ENCODE measurements at regions of chr19 and their contacts with region 1.

Region 1: GRCh38 chr19:14347999-14348889 is 33.0 kb upstream of the ADGRE5 start:
- DNase-seq: peak; percentile 49 to 66 (median 59)
- H3K4me3 ChIP-seq: no peak overlapping the region
- H3K4me3 Mint-ChIP-seq: peak overlapping the region; percentile 48 to 72 (median 68)
- H3K27ac ChIP-seq: no peak overlapping the region
- H3K27ac Mint-ChIP-seq: peak overlapping the region in 3 of 7 donors; percentile 19 to 62 (median 22)
- H3K4me1 ChIP-seq: peaks cover 27% of the 10 kb centered on the region
- H3K4me1 Mint-ChIP-seq: peaks cover 9 to 28% (median 17%) of the 10 kb centered on the region in 4 donors
- H3K27me3 ChIP-seq: no peaks in the 10 kb centered on the region
- H3K27me3 Mint-ChIP-seq: no peaks in the 10 kb centered on the region

Region 2: DNA sequence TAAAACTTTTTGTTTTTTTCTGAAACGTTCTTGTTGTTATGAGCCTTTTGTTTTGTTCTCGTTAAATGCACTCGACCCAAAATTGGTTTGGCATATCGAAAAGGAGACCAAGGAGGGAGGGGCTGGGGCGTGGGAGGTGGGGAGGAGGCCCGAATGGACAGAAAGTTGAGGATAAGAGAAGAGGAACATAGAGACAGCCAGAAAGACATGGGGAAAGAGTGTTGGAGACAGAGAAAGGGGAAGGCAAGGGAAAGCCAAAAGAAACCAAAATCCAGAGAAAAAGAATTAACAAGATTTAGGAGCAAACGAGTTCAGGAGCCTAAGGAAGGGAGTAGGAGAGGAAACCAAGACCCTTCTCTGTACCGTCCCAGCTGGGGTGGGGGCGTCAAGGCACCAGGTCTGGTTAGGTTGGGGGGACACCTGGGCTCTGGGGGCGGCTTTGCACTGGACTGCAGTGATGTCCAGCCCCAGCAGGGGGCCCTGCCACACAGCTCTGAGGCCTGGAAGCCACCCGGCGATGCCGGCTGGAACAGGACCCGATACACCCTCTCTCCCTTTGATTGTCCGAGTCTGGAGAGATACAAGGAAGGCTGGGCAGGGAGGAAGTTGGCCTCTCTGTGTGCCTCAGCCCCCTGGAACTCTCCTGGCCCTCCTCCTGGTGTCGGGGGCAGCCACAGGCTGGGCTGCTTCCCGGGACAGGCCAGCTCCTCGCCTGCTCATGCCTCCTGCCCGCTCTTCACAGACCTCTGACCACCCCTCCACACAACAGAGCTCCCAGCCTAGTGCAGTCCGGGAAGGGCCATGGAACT is 200.2 kb before region 1 on chr19:
- CTCF ChIA-PET with region 1: interaction called, 15 read pairs
- POLR2A ChIA-PET with region 1: interaction called, 3 read pairs
- intact Hi-C with region 1: no loop called
- DNase-seq: peak in 4 of 5 donors; percentile 35 to 47 (median 41)
- H3K4me3 ChIP-seq: no peak overlapping the region
- H3K4me3 Mint-ChIP-seq: peak overlapping the region in 7 of 8 donors; percentile 51 to 68 (median 62)
- H3K27ac ChIP-seq: peak overlapping the region; percentile 74
- H3K27ac Mint-ChIP-seq: peak overlapping the region; percentile 90 to 99 (median 97)
- H3K4me1 ChIP-seq: peaks cover 36% of the 10 kb centered on the region
- H3K4me1 Mint-ChIP-seq: peaks cover 15 to 43% (median 28%) of the 10 kb centered on the region in 4 donors
- H3K27me3 ChIP-seq: no peaks in the 10 kb centered on the region
- H3K27me3 Mint-ChIP-seq: no peaks in the 10 kb centered on the region

Region 3: GRCh38 chr19:14198384-14199376 is 149.6 kb before region 1 on chr19:
- CTCF ChIA-PET with region 1: interaction called, 98 read pairs
- POLR2A ChIA-PET with region 1: interaction called, 6 read pairs
- intact Hi-C with region 1: loop called (anchors 1 kb)
- DNase-seq: no peak
- H3K4me3 ChIP-seq: no peak overlapping the region
- H3K4me3 Mint-ChIP-seq: no peak overlapping the region
- H3K27ac ChIP-seq: no peak overlapping the region
- H3K27ac Mint-ChIP-seq: no peak overlapping the region
- H3K4me1 ChIP-seq: peaks cover 3% of the 10 kb centered on the region
- H3K4me1 Mint-ChIP-seq: peaks cover 15 to 47% (median 33%) of the 10 kb centered on the region in 4 donors
- H3K27me3 ChIP-seq: no peaks in the 10 kb centered on the region
- H3K27me3 Mint-ChIP-seq: peaks cover 0 to 1% of the 10 kb centered on the region in 2 donors

Region 4: DNA sequence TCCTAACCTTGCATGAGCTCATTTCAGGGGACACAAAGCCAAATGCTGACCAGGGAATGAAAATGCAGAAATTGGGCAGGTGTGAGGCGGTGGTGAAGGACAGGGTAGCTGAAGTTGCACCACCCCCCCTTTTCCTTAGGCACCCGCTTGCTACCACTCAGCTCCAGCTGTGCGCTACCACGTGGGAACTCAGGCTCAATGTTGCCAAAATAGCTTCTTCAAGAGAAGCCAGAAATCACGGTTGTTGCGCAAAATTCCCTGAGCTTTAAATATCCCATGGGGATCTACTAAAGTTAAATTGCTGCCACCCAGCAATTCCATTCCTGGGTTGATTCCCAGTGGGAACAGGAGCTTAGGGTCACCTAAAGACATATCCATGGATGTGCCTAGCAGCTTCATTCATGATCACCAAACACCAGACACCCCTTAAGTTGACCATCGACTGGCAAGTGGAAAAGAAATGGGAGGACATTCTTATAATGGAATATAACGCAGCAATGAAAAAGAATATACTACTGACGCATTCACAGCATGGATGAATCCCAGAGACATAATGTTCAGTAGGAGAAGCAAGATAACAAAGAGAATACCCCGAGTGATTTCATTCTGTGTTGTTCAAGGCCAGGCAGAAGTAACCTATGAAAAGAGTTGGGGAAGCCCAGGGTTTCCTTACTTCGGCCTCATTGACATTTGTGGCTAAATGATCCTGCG is 129.5 kb before region 1 on chr19:
- CTCF ChIA-PET with region 1: interaction called, 20 read pairs
- POLR2A ChIA-PET with region 1: interaction called, 4 read pairs
- intact Hi-C with region 1: no loop called
- DNase-seq: no peak
- H3K4me3 ChIP-seq: no peak overlapping the region
- H3K4me3 Mint-ChIP-seq: no peak overlapping the region
- H3K27ac ChIP-seq: no peak overlapping the region
- H3K27ac Mint-ChIP-seq: peak overlapping the region in 3 of 7 donors; percentile 30 to 69 (median 42)
- H3K4me1 ChIP-seq: no peaks in the 10 kb centered on the region
- H3K4me1 Mint-ChIP-seq: peaks cover 7 to 21% (median 11%) of the 10 kb centered on the region in 4 donors
- H3K27me3 ChIP-seq: no peaks in the 10 kb centered on the region
- H3K27me3 Mint-ChIP-seq: peaks cover 0 to 1% of the 10 kb centered on the region in 2 donors

Region 5: GRCh38 chr19:14337510-14337909 is 10.7 kb before region 1 on chr19:
- CTCF ChIA-PET with region 1: interaction called, 11 read pairs
- POLR2A ChIA-PET with region 1: no interaction called
- intact Hi-C with region 1: no loop called
- DNase-seq: peak; percentile 43 to 62 (median 54)
- H3K4me3 ChIP-seq: no peak overlapping the region
- H3K4me3 Mint-ChIP-seq: no peak overlapping the region
- H3K27ac ChIP-seq: no peak overlapping the region
- H3K27ac Mint-ChIP-seq: peak overlapping the region in 2 of 7 donors; percentile 13 to 66
- H3K4me1 ChIP-seq: peaks cover 15% of the 10 kb centered on the region
- H3K4me1 Mint-ChIP-seq: peaks cover 4 to 14% (median 10%) of the 10 kb centered on the region in 4 donors
- H3K27me3 ChIP-seq: no peaks in the 10 kb centered on the region
- H3K27me3 Mint-ChIP-seq: peaks cover 0 to 2% of the 10 kb centered on the region in 2 donors

Region 6: DNA sequence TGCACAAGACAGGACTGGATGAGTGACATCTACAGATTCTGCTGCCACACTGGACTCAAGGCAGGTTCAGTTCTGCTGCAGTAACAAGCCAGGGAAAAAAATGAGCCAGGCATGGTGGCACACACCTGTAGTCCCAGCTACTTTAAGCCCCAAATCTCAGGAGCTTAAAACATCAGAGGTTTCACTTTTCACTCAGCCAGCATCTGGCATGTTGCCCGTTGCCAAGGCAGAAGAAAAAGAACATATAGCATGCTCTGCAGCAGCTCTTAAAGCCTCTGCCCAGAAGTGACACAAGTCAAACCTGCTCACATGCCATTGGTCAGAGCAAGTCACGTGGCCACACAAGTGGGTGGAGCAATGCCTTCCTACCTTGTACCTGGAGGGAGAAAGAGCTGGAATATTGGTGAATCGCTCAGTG is 18.3 kb after region 1 on chr19:
- CTCF ChIA-PET with region 1: interaction called, 85 read pairs
- POLR2A ChIA-PET with region 1: interaction called, 79 read pairs
- intact Hi-C with region 1: no loop called
- DNase-seq: peak; percentile 92 to 96 (median 94)
- H3K4me3 ChIP-seq: peak overlapping the region in 1 of 2 donors; percentile 54
- H3K4me3 Mint-ChIP-seq: peak overlapping the region; percentile 55 to 92 (median 80)
- H3K27ac ChIP-seq: peak overlapping the region; percentile 100
- H3K27ac Mint-ChIP-seq: peak overlapping the region; percentile 89 to 100 (median 97)
- H3K4me1 ChIP-seq: peaks cover 92% of the 10 kb centered on the region
- H3K4me1 Mint-ChIP-seq: peaks cover 42 to 76% (median 58%) of the 10 kb centered on the region in 4 donors
- H3K27me3 ChIP-seq: no peaks in the 10 kb centered on the region
- H3K27me3 Mint-ChIP-seq: no peaks in the 10 kb centered on the region

Region 7: GRCh38 chr19:14383661-14384555 is 35.7 kb after region 1 on chr19:
- CTCF ChIA-PET with region 1: interaction called, 213 read pairs
- POLR2A ChIA-PET with region 1: interaction called, 107 read pairs
- intact Hi-C with region 1: no loop called
- DNase-seq: peak in 3 of 5 donors; percentile 40 to 91 (median 41)
- H3K4me3 ChIP-seq: peak overlapping the region; percentile 40 to 82
- H3K4me3 Mint-ChIP-seq: peak overlapping the region; percentile 91 to 99 (median 98)
- H3K27ac ChIP-seq: peak overlapping the region; percentile 99
- H3K27ac Mint-ChIP-seq: peak overlapping the region; percentile 96 to 100 (median 98)
- H3K4me1 ChIP-seq: peaks cover 41% of the 10 kb centered on the region
- H3K4me1 Mint-ChIP-seq: peaks cover 19 to 66% (median 37%) of the 10 kb centered on the region in 4 donors
- H3K27me3 ChIP-seq: no peaks in the 10 kb centered on the region
- H3K27me3 Mint-ChIP-seq: peaks cover 0 to 4% of the 10 kb centered on the region in 2 donors